Motor neuron (in vitro differentiated cells): ENCODE measurements at regions of chr18 and their contacts with region 1.

Region 1: GRCh38 chr18:32424696-32425095 is 46.0 kb downstream of the GAREM1 start:
- ATAC-seq: no peak
- H3K4me3 ChIP-seq: no peak overlapping the region
- H3K27ac ChIP-seq: no peak overlapping the region
- H3K4me1 ChIP-seq: no peaks in the 10 kb centered on the region

Region 2: DNA sequence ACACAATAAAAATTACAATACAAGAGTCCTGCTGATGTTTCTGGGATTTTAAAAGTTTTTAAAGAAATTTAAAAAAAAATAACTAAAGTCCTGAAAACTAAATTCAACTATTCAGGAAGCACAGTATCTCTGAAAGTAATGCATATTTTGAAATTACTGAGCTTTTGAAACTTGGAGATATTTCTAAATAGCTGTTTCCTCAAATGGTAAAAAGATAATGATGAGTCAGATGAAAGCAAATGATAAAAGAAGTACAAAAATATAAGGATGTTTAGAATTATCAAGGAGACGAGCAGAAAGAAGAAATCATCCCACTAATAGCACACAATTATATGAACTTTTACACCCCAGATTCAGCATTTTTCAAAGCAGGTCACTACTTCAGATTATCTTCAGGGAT is 573.9 kb before region 1 on chr18:
- in situ Hi-C with region 1: no loop called
- ATAC-seq: no peak
- H3K4me3 ChIP-seq: no peak overlapping the region
- H3K27ac ChIP-seq: no peak overlapping the region
- H3K4me1 ChIP-seq: no peaks in the 10 kb centered on the region

Region 3: DNA sequence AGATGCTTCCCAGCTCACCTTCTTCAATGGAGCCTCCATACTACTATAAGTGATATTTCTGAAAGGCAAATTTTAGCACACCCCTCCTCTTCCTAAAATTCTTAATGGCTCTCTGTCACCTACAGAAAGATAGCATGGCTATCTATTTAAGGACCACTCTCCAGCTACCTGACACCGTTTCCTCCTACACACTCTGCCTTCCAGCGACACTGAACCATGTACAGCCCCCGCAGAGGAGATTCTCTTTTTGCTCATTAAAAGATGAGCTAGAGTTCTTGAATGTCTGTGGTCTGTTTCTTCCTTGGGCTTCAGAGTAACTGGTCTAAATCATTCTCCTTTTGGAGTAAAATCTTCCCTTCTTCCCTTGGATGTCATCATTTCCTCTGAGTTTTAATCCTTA is 84.4 kb after region 1 on chr18:
- in situ Hi-C with region 1: loop called in 1 of 9 experiments (anchors 25 kb)
- ATAC-seq: no peak
- H3K4me3 ChIP-seq: no peak overlapping the region
- H3K27ac ChIP-seq: no peak overlapping the region
- H3K4me1 ChIP-seq: no peaks in the 10 kb centered on the region